IMR-90 (cell line): ENCODE measurements at regions of chr20 and their contacts with region 1.

Region 1: DNA sequence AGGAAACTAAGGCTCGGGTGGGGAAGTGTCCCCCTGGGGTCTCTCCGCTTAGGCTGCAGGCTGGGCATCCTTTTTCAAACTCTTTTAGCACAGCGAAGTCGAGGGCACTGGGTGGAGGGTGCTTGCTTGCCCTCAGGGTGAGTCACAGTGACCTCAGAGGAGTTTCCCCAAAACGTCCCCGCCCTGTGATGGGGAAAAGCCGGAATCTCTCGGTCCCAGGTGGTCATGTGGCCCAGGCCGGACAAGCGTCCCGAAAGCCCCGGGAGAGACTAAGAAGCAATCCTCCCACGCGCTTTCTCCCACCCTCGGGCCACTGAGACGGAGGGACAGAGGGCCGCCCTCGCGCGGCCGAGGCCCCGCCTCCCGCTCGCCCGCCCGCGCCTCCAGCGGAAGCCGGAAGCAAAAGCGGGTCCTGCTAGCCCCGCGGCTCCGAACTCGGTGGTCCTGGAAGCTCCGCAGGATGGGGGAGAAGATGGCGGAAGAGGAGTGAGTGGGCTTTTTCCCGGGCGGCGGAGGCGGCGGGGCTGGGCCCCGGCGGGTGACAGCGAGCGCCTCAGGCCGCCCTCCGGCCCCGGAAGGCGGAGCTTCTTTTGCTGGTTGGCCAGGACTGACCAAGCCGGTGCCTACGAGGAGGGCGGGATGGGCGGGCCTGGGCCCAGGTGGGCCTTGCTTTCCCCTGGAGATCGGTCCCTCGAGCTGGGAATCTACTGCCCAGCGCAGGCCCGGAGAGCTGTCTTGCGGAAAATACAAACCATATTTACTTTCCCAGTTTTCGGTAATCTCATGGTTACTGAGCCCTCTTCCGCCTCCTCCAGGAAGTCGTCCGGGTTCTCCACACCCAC is at the start of gene SLC9A8:
- DNase-seq: peak; percentile 85
- ATAC-seq: peak; percentile 97
- H3K4me3 ChIP-seq: peak within 1 kb of the TSS; percentile 86
- H3K27ac ChIP-seq: peak within 1 kb of the TSS; percentile 77
- H3K4me1 ChIP-seq: peaks cover 7% of the 10 kb centered on the region
- H3K27me3 ChIP-seq: no peaks in the 10 kb centered on the region
- CTCF ChIP-seq: peak; percentile 42
- POLR2A ChIP-seq: peak; percentile 83
- RAD21 ChIP-seq: no peak
- total RNA-seq, gene SLC9A8: 3.6 and 5.0 TPM in 2 replicates

Region 2: GRCh38 chr20:49685809-49686208 is 126.9 kb before region 1 on chr20:
- CTCF ChIA-PET with region 1: no interaction called
- POLR2A ChIA-PET with region 1: no interaction called
- dilution Hi-C with region 1: no loop called
- in situ Hi-C with region 1: no loop called
- intact Hi-C with region 1: no loop called
- DNase-seq: peak; percentile 72
- ATAC-seq: peak; percentile 83
- H3K4me3 ChIP-seq: no peak overlapping the region
- H3K27ac ChIP-seq: no peak overlapping the region
- H3K4me1 ChIP-seq: peaks cover 7% of the 10 kb centered on the region
- H3K27me3 ChIP-seq: no peaks in the 10 kb centered on the region
- CTCF ChIP-seq: no peak
- POLR2A ChIP-seq: no peak
- RAD21 ChIP-seq: no peak

Region 3: GRCh38 chr20:49713753-49714712 is 98.7 kb before region 1 on chr20 and contains the start of gene B4GALT5:
- CTCF ChIA-PET with region 1: no interaction called
- POLR2A ChIA-PET with region 1: no interaction called
- dilution Hi-C with region 1: no loop called
- in situ Hi-C with region 1: no loop called
- intact Hi-C with region 1: loop called (anchors 5 kb)
- DNase-seq: peak; percentile 72
- ATAC-seq: peak; percentile 93
- H3K4me3 ChIP-seq: peak within 1 kb of the TSS; percentile 100
- H3K27ac ChIP-seq: peak within 1 kb of the TSS; percentile 88
- H3K4me1 ChIP-seq: peaks cover 8% of the 10 kb centered on the region
- H3K27me3 ChIP-seq: no peaks in the 10 kb centered on the region
- CTCF ChIP-seq: no peak
- POLR2A ChIP-seq: no peak
- RAD21 ChIP-seq: no peak
- total RNA-seq, gene B4GALT5: 11.3 and 13.9 TPM in 2 replicates